Dendritic cell treated with granulocyte-macrophage colony-stimulating factor and Interleukin-4, amounts not matched to agents 40 ng/mL and 50 ng/mL, for 4 days (primary cell): ENCODE measurements at regions of chr3 and their contacts with region 1.

Region 1: GRCh38 chr3:53938645-53939044 is 47.0 kb upstream of the SELENOK start:
- H3K4me3 Mint-ChIP-seq: no peak overlapping the region
- H3K27ac Mint-ChIP-seq: no peak overlapping the region
- H3K4me1 Mint-ChIP-seq: no peaks in the 10 kb centered on the region
- H3K27me3 Mint-ChIP-seq: peaks cover 24% of the 10 kb centered on the region

Region 2: GRCh38 chr3:54374214-54374855 is 435.7 kb after region 1 on chr3:
- intact Hi-C with region 1: loop called (anchors 2 kb)
- H3K4me3 Mint-ChIP-seq: no peak overlapping the region
- H3K27ac Mint-ChIP-seq: no peak overlapping the region
- H3K4me1 Mint-ChIP-seq: no peaks in the 10 kb centered on the region
- H3K27me3 Mint-ChIP-seq: no peaks in the 10 kb centered on the region

Region 3: GRCh38 chr3:54427941-54428871 is 489.6 kb after region 1 on chr3:
- intact Hi-C with region 1: loop called (anchors 5 kb)
- H3K4me3 Mint-ChIP-seq: no peak overlapping the region
- H3K27ac Mint-ChIP-seq: no peak overlapping the region
- H3K4me1 Mint-ChIP-seq: no peaks in the 10 kb centered on the region
- H3K27me3 Mint-ChIP-seq: no peaks in the 10 kb centered on the region